ENCODE measurements at regions of chr3 and their contacts with region 1.

Region 1: GRCh38 chr3:160399125-160400029 is at the starts of genes IFT80 and SMC4:
- DNase-seq: peak; percentile 97
- ATAC-seq: peak; percentile 97
- H3K4me3 Mint-ChIP-seq: peak within 1 kb of the TSS; percentile 95
- H3K27ac Mint-ChIP-seq: peak within 1 kb of the TSS; percentile 99
- H3K4me1 Mint-ChIP-seq: peaks cover 22% of the 10 kb centered on the region
- H3K27me3 Mint-ChIP-seq: peaks cover 6% of the 10 kb centered on the region
- CTCF ChIP-seq: no peak
- total RNA-seq, gene IFT80: 9.2 to 10.4 TPM
- total RNA-seq, gene SMC4: 149 to 154 TPM

Region 2: GRCh38 chr3:160099834-160100233 is 299.5 kb before region 1 on chr3:
- CTCF ChIA-PET with region 1: no interaction called
- POLR2A ChIA-PET with region 1: no interaction called
- intact Hi-C with region 1: no loop called
- DNase-seq: no peak
- ATAC-seq: no peak
- H3K4me3 Mint-ChIP-seq: no peak overlapping the region
- H3K27ac Mint-ChIP-seq: no peak overlapping the region
- H3K4me1 Mint-ChIP-seq: no peaks in the 10 kb centered on the region
- H3K27me3 Mint-ChIP-seq: peaks cover 3% of the 10 kb centered on the region
- CTCF ChIP-seq: no peak

Region 3: DNA sequence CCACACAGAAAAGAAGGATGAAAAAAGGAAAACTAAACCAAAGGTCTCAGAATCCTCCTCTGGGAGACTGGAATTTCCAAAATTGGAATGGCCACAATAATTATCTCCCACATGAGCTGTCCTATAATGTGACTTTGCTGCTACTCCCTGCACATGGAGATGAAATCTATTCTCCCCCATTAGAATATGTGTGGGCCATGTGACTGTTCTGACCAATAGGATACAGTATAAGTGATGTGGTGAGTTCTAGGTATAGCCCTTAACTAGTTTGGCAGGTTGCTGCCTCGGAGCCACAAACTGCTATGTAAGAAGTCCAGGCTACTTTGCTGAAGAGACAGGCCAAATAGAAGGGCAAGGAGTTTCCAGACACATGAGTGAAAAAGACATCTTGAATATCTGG is 45.0 kb after region 1 on chr3:
- CTCF ChIA-PET with region 1: no interaction called
- POLR2A ChIA-PET with region 1: interaction called, 28 read pairs
- intact Hi-C with region 1: loop called (anchors 5 kb)
- DNase-seq: no peak
- ATAC-seq: no peak
- H3K4me3 Mint-ChIP-seq: no peak overlapping the region
- H3K27ac Mint-ChIP-seq: no peak overlapping the region
- H3K4me1 Mint-ChIP-seq: peaks cover 38% of the 10 kb centered on the region
- H3K27me3 Mint-ChIP-seq: no peaks in the 10 kb centered on the region
- CTCF ChIP-seq: no peak

Region 4: DNA sequence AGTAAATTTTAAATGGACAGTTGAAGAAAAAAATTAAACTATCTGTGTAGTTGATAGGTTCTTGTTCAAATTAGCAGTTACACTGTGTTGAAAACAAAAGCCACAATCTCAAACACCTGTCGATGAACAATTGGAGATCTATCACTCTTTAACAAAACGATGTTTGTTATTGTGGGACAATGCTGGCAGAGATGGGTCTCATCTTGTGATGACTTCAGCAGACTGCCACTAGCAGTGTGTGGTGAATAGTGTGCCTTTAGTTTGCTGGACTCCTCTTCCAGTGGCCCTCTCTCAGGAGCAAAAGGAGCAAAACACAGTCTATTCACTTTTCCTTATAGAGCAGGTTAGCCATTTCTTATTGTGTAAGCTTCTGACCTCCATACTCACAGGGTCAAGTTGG is 64.9 kb after region 1 on chr3:
- CTCF ChIA-PET with region 1: no interaction called
- POLR2A ChIA-PET with region 1: no interaction called
- intact Hi-C with region 1: no loop called
- DNase-seq: no peak
- ATAC-seq: no peak
- H3K4me3 Mint-ChIP-seq: no peak overlapping the region
- H3K27ac Mint-ChIP-seq: no peak overlapping the region
- H3K4me1 Mint-ChIP-seq: no peaks in the 10 kb centered on the region
- H3K27me3 Mint-ChIP-seq: peaks cover 9% of the 10 kb centered on the region
- CTCF ChIP-seq: no peak

Region 5: DNA sequence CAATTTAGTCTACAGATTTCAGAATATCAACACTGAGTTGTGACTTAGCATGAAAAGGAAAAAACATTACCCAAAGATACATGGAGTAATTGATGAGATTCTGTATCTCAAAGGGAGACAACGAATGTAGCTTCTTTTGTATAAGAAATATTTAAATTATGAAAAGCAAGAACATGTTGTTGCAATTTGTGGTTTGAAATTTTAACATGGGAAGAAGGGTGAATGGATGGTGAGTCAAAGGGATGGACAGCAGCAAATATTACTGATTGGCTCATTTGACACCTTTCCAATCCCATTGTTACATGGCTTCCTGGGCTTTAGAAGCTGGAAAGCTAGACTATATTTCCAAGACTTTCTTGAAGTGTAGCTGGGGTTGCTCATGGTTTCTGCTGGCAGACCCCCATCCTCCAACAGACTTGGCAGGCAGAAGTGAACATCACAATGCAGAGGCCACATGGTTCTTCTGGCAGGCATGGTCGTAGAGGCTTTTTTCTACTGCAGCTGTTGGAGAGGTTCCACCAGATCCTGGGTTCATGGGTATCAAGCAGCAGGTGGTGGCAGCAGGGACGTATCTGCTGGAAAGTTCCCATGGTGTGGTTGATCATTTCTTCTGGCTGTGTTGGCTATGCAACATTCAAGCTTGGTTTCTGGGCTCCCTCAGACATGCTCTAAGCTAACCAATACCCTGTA is 213.2 kb after region 1 on chr3:
- CTCF ChIA-PET with region 1: no interaction called
- POLR2A ChIA-PET with region 1: no interaction called
- intact Hi-C with region 1: no loop called
- DNase-seq: no peak
- ATAC-seq: no peak
- H3K4me3 Mint-ChIP-seq: no peak overlapping the region
- H3K27ac Mint-ChIP-seq: no peak overlapping the region
- H3K4me1 Mint-ChIP-seq: no peaks in the 10 kb centered on the region
- H3K27me3 Mint-ChIP-seq: peaks cover 21% of the 10 kb centered on the region
- CTCF ChIP-seq: no peak